CD8-positive, alpha-beta memory T cell (primary cell): ENCODE measurements at regions of chr6 and their contacts with region 1.

Region 1: GRCh38 chr6:42745707-42746462 is at the start of gene TBCC:
- DNase-seq: peak; percentile 90 to 98 (median 92)
- H3K4me3 ChIP-seq: peak within 1 kb of the TSS; percentile 99
- H3K4me3 Mint-ChIP-seq: peak within 1 kb of the TSS; percentile 93 to 100 (median 100)
- H3K27ac ChIP-seq: peak within 1 kb of the TSS; percentile 99
- H3K27ac Mint-ChIP-seq: peak within 1 kb of the TSS; percentile 90 to 100 (median 100)
- H3K4me1 ChIP-seq: peaks cover 33% of the 10 kb centered on the region
- H3K4me1 Mint-ChIP-seq: peaks cover 26 to 45% (median 39%) of the 10 kb centered on the region in 3 donors
- H3K27me3 ChIP-seq: no peaks in the 10 kb centered on the region
- H3K27me3 Mint-ChIP-seq: no peaks in the 10 kb centered on the region
- total RNA-seq, gene TBCC: 24.4 to 26.4 TPM

Region 2: DNA sequence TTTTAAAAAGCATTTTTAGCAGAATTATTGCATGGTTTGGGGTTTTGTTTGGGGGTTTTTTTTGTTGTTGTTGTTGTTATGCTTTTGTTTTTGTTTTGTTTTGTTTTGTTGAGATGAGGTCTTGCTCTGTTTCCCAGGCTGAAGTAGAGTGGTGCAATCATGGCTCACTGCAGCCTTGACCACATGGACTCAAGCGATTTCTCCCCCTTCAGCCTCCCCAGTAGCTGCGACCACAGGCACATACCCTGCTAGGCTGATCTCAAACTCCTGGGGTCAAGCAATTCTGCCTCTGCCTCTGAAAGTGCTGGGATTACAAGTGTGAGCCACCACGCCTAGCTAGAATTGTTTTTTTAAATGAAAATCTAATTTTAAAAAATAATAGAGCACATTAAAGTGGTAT is 146.3 kb before region 1 on chr6:
- CTCF ChIA-PET with region 1: no interaction called
- POLR2A ChIA-PET with region 1: no interaction called
- DNase-seq: no peak
- H3K4me3 ChIP-seq: no peak overlapping the region
- H3K4me3 Mint-ChIP-seq: no peak overlapping the region
- H3K27ac ChIP-seq: no peak overlapping the region
- H3K27ac Mint-ChIP-seq: peak overlapping the region in 2 of 8 donors; percentile 41 to 55
- H3K4me1 ChIP-seq: no peaks in the 10 kb centered on the region
- H3K4me1 Mint-ChIP-seq: peaks cover 19 to 40% (median 38%) of the 10 kb centered on the region in 3 donors
- H3K27me3 ChIP-seq: no peaks in the 10 kb centered on the region
- H3K27me3 Mint-ChIP-seq: no peaks in the 10 kb centered on the region

Region 3: DNA sequence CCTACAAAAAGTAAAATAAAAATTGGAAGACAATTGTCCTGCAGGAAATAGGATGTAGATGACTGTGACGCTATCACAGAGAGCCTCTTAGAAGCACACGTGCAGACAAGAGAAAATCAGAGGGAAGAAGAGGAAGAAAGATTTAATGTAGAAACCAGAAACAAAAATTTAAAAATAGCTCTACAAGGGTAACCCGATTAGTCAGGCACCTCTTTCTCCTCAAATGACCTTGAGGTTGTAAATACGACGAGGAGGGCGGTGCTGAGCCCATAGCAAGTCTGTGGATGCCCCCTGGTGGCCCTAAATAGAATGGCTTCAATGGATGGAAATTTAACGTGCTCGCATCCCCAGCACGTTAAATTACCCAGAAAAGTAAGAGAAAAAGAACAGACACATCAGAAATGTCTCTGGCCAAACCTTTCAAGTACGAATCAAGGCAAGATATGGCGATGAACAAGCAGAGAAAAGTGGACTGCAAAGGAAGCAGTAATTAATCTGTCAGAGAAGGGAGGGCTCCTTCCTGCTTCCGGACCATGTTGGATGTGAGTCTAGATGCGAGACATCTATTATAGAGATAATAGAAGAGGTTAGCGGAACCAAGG is 19.3 kb before region 1 on chr6:
- CTCF ChIA-PET with region 1: interaction called, 19 read pairs
- POLR2A ChIA-PET with region 1: interaction called, 30 read pairs
- DNase-seq: peak; percentile 51 to 85 (median 75)
- H3K4me3 ChIP-seq: peak overlapping the region; percentile 68
- H3K4me3 Mint-ChIP-seq: peak overlapping the region; percentile 86 to 91 (median 89)
- H3K27ac ChIP-seq: peak overlapping the region; percentile 34
- H3K27ac Mint-ChIP-seq: peak overlapping the region; percentile 63 to 98 (median 94)
- H3K4me1 ChIP-seq: peaks cover 15% of the 10 kb centered on the region
- H3K4me1 Mint-ChIP-seq: peaks cover 19 to 23% (median 20%) of the 10 kb centered on the region in 3 donors
- H3K27me3 ChIP-seq: no peaks in the 10 kb centered on the region
- H3K27me3 Mint-ChIP-seq: peaks cover 0 to 3% of the 10 kb centered on the region in 2 donors

Region 4: GRCh38 chr6:42771741-42772100 is 25.8 kb after region 1 on chr6:
- CTCF ChIA-PET with region 1: interaction called, 48 read pairs
- POLR2A ChIA-PET with region 1: interaction called, 281 read pairs
- DNase-seq: peak in 2 of 5 donors; percentile 20 to 72
- H3K4me3 ChIP-seq: peak overlapping the region; percentile 35
- H3K4me3 Mint-ChIP-seq: peak overlapping the region; percentile 74 to 88 (median 81)
- H3K27ac ChIP-seq: peak overlapping the region; percentile 67
- H3K27ac Mint-ChIP-seq: peak overlapping the region; percentile 96 to 100 (median 99)
- H3K4me1 ChIP-seq: peaks cover 66% of the 10 kb centered on the region
- H3K4me1 Mint-ChIP-seq: peaks cover 67 to 85% (median 82%) of the 10 kb centered on the region in 3 donors
- H3K27me3 ChIP-seq: no peaks in the 10 kb centered on the region
- H3K27me3 Mint-ChIP-seq: no peaks in the 10 kb centered on the region

Region 5: DNA sequence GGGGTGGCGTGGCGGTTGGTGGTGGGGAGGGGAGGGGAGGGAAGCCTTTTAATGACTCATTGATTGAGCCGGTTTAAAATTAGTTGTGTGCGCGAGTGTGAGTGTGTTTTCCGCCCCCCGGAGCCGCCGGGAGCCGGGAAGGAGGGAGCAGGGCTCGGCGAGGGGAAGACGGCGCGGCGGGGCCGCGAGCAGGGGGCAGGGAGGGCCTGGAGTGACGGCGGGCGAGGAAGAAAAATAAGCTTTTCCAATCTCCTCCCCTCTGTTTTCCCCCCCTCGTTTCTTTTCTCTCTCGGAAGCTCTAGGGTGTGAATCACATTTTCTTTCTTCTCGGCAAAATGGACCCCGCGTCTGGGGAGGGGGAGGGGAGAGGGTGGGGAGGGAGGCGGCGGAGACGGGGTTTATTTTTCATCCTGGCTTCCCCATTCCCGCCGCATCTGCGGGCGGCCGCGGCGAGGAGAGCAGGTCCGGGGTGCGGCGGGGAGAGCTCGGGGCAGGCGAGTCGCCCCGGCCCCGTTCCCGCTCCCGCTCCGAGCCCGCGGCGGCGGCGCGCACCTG is 36.8 kb after region 1 on chr6:
- CTCF ChIA-PET with region 1: interaction called, 65 read pairs
- POLR2A ChIA-PET with region 1: interaction called, 415 read pairs
- DNase-seq: peak; percentile 65 to 89 (median 79)
- H3K4me3 ChIP-seq: peak overlapping the region; percentile 95
- H3K4me3 Mint-ChIP-seq: peak overlapping the region; percentile 93 to 100 (median 98)
- H3K27ac ChIP-seq: peak overlapping the region; percentile 99
- H3K27ac Mint-ChIP-seq: peak overlapping the region in 7 of 8 donors; percentile 98 to 100 (median 100)
- H3K4me1 ChIP-seq: peaks cover 64% of the 10 kb centered on the region
- H3K4me1 Mint-ChIP-seq: peaks cover 34 to 35% (median 34%) of the 10 kb centered on the region in 3 donors
- H3K27me3 ChIP-seq: no peaks in the 10 kb centered on the region
- H3K27me3 Mint-ChIP-seq: peaks cover 0 to 13% of the 10 kb centered on the region in 2 donors

Region 6: DNA sequence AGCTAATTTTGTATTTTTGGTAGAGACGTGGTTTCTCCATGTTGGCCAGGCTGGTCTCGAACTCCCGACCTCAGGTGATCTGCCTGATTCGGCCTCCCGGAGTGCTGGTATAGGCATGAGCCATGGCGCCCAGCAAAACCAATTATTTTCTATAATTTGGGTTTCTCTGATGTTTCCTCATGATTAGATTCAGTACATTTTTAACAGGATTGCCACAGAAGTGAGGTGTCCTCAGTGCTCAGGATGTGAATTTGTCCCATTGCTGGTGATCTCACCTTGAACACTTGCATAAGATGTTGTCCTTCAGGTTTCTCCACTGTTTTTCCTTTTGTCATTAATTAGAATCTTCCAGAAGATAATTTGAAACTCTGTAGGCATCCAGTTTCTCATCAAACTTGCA is 88.1 kb after region 1 on chr6:
- CTCF ChIA-PET with region 1: no interaction called
- POLR2A ChIA-PET with region 1: no interaction called
- DNase-seq: no peak
- H3K4me3 ChIP-seq: no peak overlapping the region
- H3K4me3 Mint-ChIP-seq: no peak overlapping the region
- H3K27ac ChIP-seq: no peak overlapping the region
- H3K27ac Mint-ChIP-seq: peak overlapping the region in 3 of 8 donors; percentile 29 to 43 (median 36)
- H3K4me1 ChIP-seq: no peaks in the 10 kb centered on the region
- H3K4me1 Mint-ChIP-seq: peaks cover 12 to 42% (median 17%) of the 10 kb centered on the region in 3 donors
- H3K27me3 ChIP-seq: no peaks in the 10 kb centered on the region
- H3K27me3 Mint-ChIP-seq: peaks cover 0 to 1% of the 10 kb centered on the region in 2 donors

Region 7: GRCh38 chr6:42879372-42880239 is 133.7 kb after region 1 on chr6 and contains the start of gene RPL7L1:
- CTCF ChIA-PET with region 1: interaction called, 14 read pairs
- POLR2A ChIA-PET with region 1: interaction called, 24 read pairs
- DNase-seq: peak; percentile 71 to 92 (median 88)
- H3K4me3 ChIP-seq: peak within 1 kb of the TSS; percentile 94
- H3K4me3 Mint-ChIP-seq: peak within 1 kb of the TSS; percentile 91 to 99 (median 99)
- H3K27ac ChIP-seq: peak within 1 kb of the TSS; percentile 96
- H3K27ac Mint-ChIP-seq: peak within 1 kb of the TSS; percentile 89 to 100 (median 99)
- H3K4me1 ChIP-seq: peaks cover 12% of the 10 kb centered on the region
- H3K4me1 Mint-ChIP-seq: peaks cover 24 to 33% (median 33%) of the 10 kb centered on the region in 3 donors
- H3K27me3 ChIP-seq: no peaks in the 10 kb centered on the region
- H3K27me3 Mint-ChIP-seq: no peaks in the 10 kb centered on the region
- total RNA-seq, gene RPL7L1: 199 to 200 TPM

Region 8: GRCh38 chr6:43274916-43275597 is 529.2 kb after region 1 on chr6:
- CTCF ChIA-PET with region 1: no interaction called
- POLR2A ChIA-PET with region 1: no interaction called
- DNase-seq: peak; percentile 11 to 59 (median 15)
- H3K4me3 ChIP-seq: peak overlapping the region; percentile 66
- H3K4me3 Mint-ChIP-seq: peak overlapping the region; percentile 58 to 85 (median 78)
- H3K27ac ChIP-seq: no peak overlapping the region
- H3K27ac Mint-ChIP-seq: peak overlapping the region in 4 of 8 donors; percentile 2 to 81 (median 44)
- H3K4me1 ChIP-seq: peaks cover 11% of the 10 kb centered on the region
- H3K4me1 Mint-ChIP-seq: peaks cover 7 to 19% (median 9%) of the 10 kb centered on the region in 3 donors
- H3K27me3 ChIP-seq: peaks cover 18% of the 10 kb centered on the region
- H3K27me3 Mint-ChIP-seq: peaks cover 19 to 43% of the 10 kb centered on the region in 2 donors